AG04449 (cell line): ENCODE measurements at regions of chr14 and their contacts with region 1.

Region 1: DNA sequence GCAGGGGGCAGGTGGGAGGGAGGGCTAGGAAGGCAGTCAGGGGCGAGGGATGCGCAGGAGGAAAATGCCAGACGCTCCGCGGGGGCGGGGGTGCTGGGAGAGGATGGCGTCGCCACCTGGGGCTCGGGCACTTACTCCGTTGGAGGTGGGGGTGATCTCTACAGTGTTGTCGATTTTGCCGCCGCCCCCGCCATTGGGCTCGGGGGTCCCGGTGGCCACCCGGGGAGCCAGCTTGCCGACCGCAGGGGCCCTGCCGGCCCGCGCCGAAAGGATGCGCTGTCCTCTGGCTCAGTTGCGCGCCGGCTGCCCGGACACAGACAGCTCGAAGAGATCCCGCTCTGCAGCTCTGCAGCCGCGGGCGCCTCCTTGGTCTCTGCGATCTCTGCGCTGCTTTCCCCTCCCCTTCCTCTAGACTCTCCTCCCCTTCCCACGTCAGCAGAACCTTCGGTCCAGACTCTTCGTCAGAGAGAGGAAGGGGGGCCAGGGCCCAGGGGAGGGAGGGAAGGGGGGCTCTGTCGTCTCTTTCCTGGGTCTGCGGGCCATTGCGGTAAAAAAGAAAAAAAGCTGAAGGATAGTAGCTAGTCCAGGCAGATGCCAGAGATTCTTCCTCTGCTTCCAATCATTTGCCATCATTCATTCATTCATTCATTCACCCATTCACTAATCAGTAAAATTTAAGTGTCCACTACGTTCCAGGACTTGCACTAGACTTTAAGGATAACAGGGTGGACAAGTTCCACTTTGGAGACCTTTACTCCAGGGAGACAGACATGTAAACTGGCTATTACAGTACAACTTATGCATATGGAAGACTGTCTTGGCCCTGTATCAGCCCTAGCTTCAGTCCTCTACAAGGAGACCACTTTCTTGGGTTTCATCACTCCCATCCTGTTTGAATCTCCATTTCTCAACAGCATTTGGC is at the start of gene SLC22A17:
- DNase-seq: peak; percentile 59
- H3K4me3 ChIP-seq: peak within 1 kb of the TSS; percentile 87
- CTCF ChIP-seq: peak; percentile 10

Region 2: GRCh38 chr14:23366426-23366921 is 13.7 kb after region 1 on chr14:
- CTCF ChIA-PET with region 1: interaction called, 25 read pairs
- POLR2A ChIA-PET with region 1: interaction called, 15 read pairs
- DNase-seq: no peak
- H3K4me3 ChIP-seq: peak overlapping the region; percentile 74
- CTCF ChIP-seq: no peak